Dorsolateral prefrontal cortex (tissue), 120 donors: ENCODE measurements at regions of chr12 and their contacts with region 1.

Region 1: GRCh38 chr12:104381731-104382480 is 74.8 kb upstream of the CHST11 start:
- DNase-seq: peak; percentile 64 to 86 (median 80)
- H3K4me3 ChIP-seq: peak overlapping the region in 24 of 59 donors; percentile 4 to 38 (median 25)
- H3K27ac ChIP-seq: no peak overlapping the region
- H3K27me3 ChIP-seq: no peaks in the 10 kb centered on the region
- CTCF ChIP-seq: peak; percentile 89 to 99 (median 97)

Region 2: DNA sequence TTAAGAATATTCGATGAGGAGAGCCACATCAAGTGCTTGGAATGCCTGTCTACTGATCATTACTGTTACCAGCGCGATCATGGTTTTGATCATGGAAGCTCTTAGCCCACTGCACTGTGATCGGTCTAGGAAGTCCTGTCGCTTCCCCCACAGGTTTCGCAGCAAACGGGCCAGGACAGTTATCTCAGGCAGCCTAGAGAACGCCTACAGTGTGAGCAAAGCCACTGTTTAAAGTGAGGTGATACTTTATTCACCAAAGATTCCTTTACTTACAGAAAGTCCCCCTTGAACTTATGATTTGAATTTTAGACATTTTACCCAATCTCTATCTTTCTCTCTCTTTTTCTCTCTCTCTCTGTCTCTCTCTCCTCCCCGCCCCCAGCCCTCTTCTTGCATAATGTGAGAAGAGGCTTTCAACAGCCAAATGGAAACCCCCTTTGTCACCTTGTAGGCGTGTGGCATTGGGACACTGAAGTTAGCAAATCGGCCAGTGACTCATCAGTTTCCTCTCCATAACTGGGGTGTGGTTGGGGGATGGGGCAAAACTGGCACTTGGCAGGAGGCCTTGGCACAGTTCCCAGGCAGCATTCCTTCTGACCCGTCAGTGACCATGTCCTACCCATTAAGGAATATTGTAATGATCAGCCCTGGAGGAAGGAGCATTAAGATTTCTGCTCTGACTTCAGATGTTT is 289.6 kb after region 1 on chr12:
- intact Hi-C with region 1: loop called in 1 of 2 experiments (anchors 5 kb)
- DNase-seq: peak in 7 of 10 donors; percentile 23 to 73 (median 60)
- H3K4me3 ChIP-seq: no peak overlapping the region
- H3K27ac ChIP-seq: peak overlapping the region in 47 of 59 donors; percentile 7 to 98 (median 66)
- H3K27me3 ChIP-seq: no peaks in the 10 kb centered on the region
- CTCF ChIP-seq: no peak

Region 3: GRCh38 chr12:104877123-104877705 is 495.3 kb after region 1 on chr12:
- intact Hi-C with region 1: loop called (anchors 5 kb)
- DNase-seq: peak in 4 of 10 donors; percentile 7 to 53 (median 29)
- H3K4me3 ChIP-seq: no peak overlapping the region
- H3K27ac ChIP-seq: no peak overlapping the region
- H3K27me3 ChIP-seq: no peaks in the 10 kb centered on the region
- CTCF ChIP-seq: peak; percentile 25 to 85 (median 60)

Region 4: GRCh38 chr12:105053116-105053572 is 671.2 kb after region 1 on chr12:
- intact Hi-C with region 1: loop called (anchors 2 to 5 kb)
- DNase-seq: peak; percentile 51 to 90 (median 62)
- H3K4me3 ChIP-seq: no peak overlapping the region
- H3K27ac ChIP-seq: no peak overlapping the region
- H3K27me3 ChIP-seq: no peaks in the 10 kb centered on the region
- CTCF ChIP-seq: peak; percentile 81 to 99 (median 94)